CD8-positive, alpha-beta T cell (primary cell): ENCODE measurements at regions of chr19 and their contacts with region 1.

Region 1: DNA sequence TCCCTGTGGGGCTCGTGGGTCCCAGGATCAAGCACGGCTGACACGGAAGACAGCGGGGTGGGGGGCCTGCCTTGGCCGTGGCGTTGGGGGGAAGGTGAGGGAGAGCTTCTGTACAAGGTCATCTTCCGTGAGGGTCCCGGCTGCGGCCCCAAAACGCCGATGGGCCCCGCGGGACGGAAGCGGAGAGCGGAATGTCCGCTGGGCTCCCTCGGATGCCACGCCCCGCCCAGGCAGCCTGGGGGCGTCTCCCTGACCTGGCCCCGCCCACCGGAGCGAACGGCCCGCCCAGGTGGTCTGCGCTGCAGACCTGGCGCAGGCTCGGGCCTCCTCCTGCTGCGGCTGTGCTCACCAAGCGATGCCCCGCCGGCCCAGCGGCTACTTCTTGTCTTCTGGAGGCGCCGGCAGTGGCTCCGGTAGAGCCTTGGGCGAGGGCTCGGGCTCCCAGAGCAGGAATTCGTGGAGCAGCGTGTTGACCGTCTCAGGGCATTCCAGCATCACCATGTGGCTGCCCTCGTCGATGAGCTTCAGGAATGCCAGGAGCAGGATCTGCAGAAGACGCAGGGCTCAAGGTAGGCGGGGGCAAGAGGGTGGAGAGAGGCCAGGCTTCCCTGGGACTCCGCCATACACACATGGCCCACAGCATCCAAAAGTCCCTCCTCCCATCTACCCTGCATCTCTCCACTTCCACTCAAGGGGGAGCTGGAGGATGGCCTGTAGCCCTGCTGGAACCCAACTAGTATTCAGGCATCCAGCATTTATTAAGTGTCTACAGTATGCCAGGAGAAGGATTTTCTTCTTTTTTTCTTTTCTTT is 10.7 kb downstream of the ABHD8 start:
- DNase-seq: peak; percentile 61 to 90 (median 81)
- ATAC-seq: peak; percentile 96
- H3K4me3 ChIP-seq: peak overlapping the region; percentile 73 to 94
- H3K4me3 Mint-ChIP-seq: peak overlapping the region; percentile 86
- H3K27ac ChIP-seq: no peak overlapping the region
- H3K27ac Mint-ChIP-seq: peak overlapping the region; percentile 77
- H3K4me1 ChIP-seq: peaks cover 5% of the 10 kb centered on the region
- H3K4me1 Mint-ChIP-seq: peaks cover 6% of the 10 kb centered on the region
- H3K27me3 ChIP-seq: no peaks in the 10 kb centered on the region
- H3K27me3 Mint-ChIP-seq: peaks cover 3% of the 10 kb centered on the region
- CTCF ChIP-seq: peak; percentile 82

Region 2: DNA sequence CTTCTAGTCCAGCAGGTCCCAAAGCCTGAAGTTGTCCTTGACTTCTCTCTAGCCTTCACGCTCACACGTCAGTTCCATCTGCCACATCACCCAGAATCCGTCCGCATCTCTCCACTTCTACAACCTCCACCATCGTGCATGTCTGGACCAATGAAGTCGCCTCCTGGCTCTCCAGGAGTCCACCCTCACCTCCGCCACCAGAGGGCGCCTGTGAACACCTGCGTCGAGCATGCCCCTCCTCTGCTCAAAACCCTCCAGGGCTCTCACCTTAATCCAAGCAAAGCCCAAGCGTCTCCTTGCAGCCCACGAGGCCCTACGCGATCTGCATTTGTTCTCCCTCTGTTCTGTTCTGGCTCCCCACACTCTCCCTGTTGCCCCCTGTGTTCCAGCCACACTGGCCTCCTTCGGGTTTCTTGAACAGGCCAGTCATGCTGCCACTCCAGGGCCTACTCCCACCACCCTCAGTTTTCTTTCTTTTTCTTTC is 31.6 kb before region 1 on chr19:
- CTCF ChIA-PET with region 1: interaction called, 14 read pairs
- POLR2A ChIA-PET with region 1: no interaction called
- intact Hi-C with region 1: no loop called
- DNase-seq: peak; percentile 81 to 95 (median 90)
- ATAC-seq: peak; percentile 100
- H3K4me3 ChIP-seq: no peak overlapping the region
- H3K4me3 Mint-ChIP-seq: no peak overlapping the region
- H3K27ac ChIP-seq: no peak overlapping the region
- H3K27ac Mint-ChIP-seq: no peak overlapping the region
- H3K4me1 ChIP-seq: peaks cover 12% of the 10 kb centered on the region
- H3K4me1 Mint-ChIP-seq: peaks cover 9% of the 10 kb centered on the region
- H3K27me3 ChIP-seq: no peaks in the 10 kb centered on the region
- H3K27me3 Mint-ChIP-seq: no peaks in the 10 kb centered on the region
- CTCF ChIP-seq: peak; percentile 69

Region 3: DNA sequence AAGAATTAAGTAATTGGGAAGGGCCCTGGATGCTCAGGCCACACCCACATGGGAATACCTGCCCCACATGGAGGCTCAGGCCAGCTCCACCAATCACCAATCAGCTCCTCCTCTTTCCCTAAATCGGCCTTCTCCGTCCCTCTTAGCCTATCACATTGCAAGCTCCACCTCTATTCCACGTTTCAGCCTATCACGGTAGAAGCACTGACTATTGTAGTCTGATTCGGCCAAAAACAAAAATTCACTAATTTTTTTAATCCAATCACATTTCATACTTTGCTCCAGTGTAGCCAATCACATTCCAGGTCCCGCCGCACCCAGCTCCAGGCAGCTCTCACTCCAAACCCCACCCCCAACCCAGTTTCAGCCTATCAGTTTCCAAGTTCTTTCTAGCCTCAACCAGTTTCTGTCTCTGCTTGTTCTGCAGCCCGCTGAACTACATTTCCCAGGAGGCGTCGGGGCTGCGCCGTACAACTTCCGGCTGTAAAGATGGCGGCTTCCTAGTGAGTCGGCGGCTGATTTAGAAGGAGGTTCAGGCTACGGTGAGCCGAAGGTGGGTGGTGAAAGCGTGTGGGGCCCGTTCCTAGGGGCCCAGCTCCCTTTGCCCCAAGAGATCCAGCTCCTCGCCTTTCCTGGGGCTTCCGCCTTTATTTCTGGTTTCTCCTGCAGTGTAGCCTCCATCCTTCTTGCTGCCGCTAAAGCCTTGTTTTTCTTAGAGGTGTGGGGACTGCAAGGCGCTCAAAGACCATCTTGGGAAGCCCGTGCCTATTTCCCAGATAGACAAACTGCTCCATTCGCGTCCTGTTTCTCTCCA is 25.3 kb before region 1 on chr19 and contains the start of gene BABAM1:
- CTCF ChIA-PET with region 1: interaction called, 14 read pairs
- POLR2A ChIA-PET with region 1: no interaction called
- intact Hi-C with region 1: loop called in 1 of 2 experiments (anchors 1 kb)
- DNase-seq: peak; percentile 81 to 98 (median 92)
- ATAC-seq: peak; percentile 93
- H3K4me3 ChIP-seq: peak within 1 kb of the TSS; percentile 72 to 82
- H3K4me3 Mint-ChIP-seq: peak within 1 kb of the TSS; percentile 79
- H3K27ac ChIP-seq: peak within 1 kb of the TSS; percentile 61 to 77
- H3K27ac Mint-ChIP-seq: peak within 1 kb of the TSS; percentile 63
- H3K4me1 ChIP-seq: peaks cover 14% of the 10 kb centered on the region
- H3K4me1 Mint-ChIP-seq: peaks cover 18% of the 10 kb centered on the region
- H3K27me3 ChIP-seq: no peaks in the 10 kb centered on the region
- H3K27me3 Mint-ChIP-seq: no peaks in the 10 kb centered on the region
- CTCF ChIP-seq: no peak
- total RNA-seq, gene BABAM1: 46.9 to 58.0 TPM

Region 4: GRCh38 chr19:17336872-17337722 is 44.6 kb after region 1 on chr19 and contains the start of gene GTPBP3:
- CTCF ChIA-PET with region 1: interaction called, 6 read pairs
- POLR2A ChIA-PET with region 1: no interaction called
- intact Hi-C with region 1: loop called (anchors 1 to 2 kb)
- DNase-seq: peak; percentile 90 to 99 (median 95)
- ATAC-seq: peak; percentile 90
- H3K4me3 ChIP-seq: peak within 1 kb of the TSS; percentile 90 to 98
- H3K4me3 Mint-ChIP-seq: peak within 1 kb of the TSS; percentile 88
- H3K27ac ChIP-seq: peak within 1 kb of the TSS; percentile 75 to 91
- H3K27ac Mint-ChIP-seq: peak within 1 kb of the TSS; percentile 91
- H3K4me1 ChIP-seq: peaks cover 34% of the 10 kb centered on the region
- H3K4me1 Mint-ChIP-seq: peaks cover 34% of the 10 kb centered on the region
- H3K27me3 ChIP-seq: no peaks in the 10 kb centered on the region
- H3K27me3 Mint-ChIP-seq: no peaks in the 10 kb centered on the region
- CTCF ChIP-seq: no peak
- total RNA-seq, gene GTPBP3: 20.8 to 25.7 TPM

Region 5: GRCh38 chr19:17346109-17346671 is 53.7 kb after region 1 on chr19:
- CTCF ChIA-PET with region 1: interaction called, 3 read pairs
- POLR2A ChIA-PET with region 1: no interaction called
- intact Hi-C with region 1: loop called in 1 of 2 experiments (anchors 1 kb)
- DNase-seq: peak; percentile 57 to 87 (median 78)
- ATAC-seq: peak; percentile 99
- H3K4me3 ChIP-seq: no peak overlapping the region
- H3K4me3 Mint-ChIP-seq: no peak overlapping the region
- H3K27ac ChIP-seq: no peak overlapping the region
- H3K27ac Mint-ChIP-seq: no peak overlapping the region
- H3K4me1 ChIP-seq: no peaks in the 10 kb centered on the region
- H3K4me1 Mint-ChIP-seq: peaks cover 5% of the 10 kb centered on the region
- H3K27me3 ChIP-seq: peaks cover 0 to 5% of the 10 kb centered on the region in 2 experiments
- H3K27me3 Mint-ChIP-seq: peaks cover 8% of the 10 kb centered on the region
- CTCF ChIP-seq: peak; percentile 97

Region 6: GRCh38 chr19:17570791-17571190 is 278.3 kb after region 1 on chr19:
- CTCF ChIA-PET with region 1: no interaction called
- POLR2A ChIA-PET with region 1: no interaction called
- intact Hi-C with region 1: loop called in 1 of 2 experiments (anchors 5 kb)
- DNase-seq: no peak
- ATAC-seq: no peak
- H3K4me3 ChIP-seq: no peak overlapping the region
- H3K4me3 Mint-ChIP-seq: no peak overlapping the region
- H3K27ac ChIP-seq: no peak overlapping the region
- H3K27ac Mint-ChIP-seq: no peak overlapping the region
- H3K4me1 ChIP-seq: no peaks in the 10 kb centered on the region
- H3K4me1 Mint-ChIP-seq: peaks cover 3% of the 10 kb centered on the region
- H3K27me3 ChIP-seq: no peaks in the 10 kb centered on the region
- H3K27me3 Mint-ChIP-seq: no peaks in the 10 kb centered on the region
- CTCF ChIP-seq: no peak